A549 (cell line): ENCODE measurements at regions of chr16 and their contacts with region 1.

Region 1: GRCh38 chr16:46908540-46909372 is 24.6 kb downstream of the GPT2 start:
- DNase-seq: peak; percentile 60 to 71
- ATAC-seq: peak; percentile 45 to 88; a peak in 3 of 6 replicates
- H3K4me3 ChIP-seq: no peak overlapping the region
- H3K27ac ChIP-seq: no peak overlapping the region
- H3K4me1 ChIP-seq: no peaks in the 10 kb centered on the region
- CTCF ChIP-seq: peak; percentile 90
- EP300 ChIP-seq: no peak
- POLR2A ChIP-seq: no peak
- RAD21 ChIP-seq: peak; percentile 67 to 77

Region 2: DNA sequence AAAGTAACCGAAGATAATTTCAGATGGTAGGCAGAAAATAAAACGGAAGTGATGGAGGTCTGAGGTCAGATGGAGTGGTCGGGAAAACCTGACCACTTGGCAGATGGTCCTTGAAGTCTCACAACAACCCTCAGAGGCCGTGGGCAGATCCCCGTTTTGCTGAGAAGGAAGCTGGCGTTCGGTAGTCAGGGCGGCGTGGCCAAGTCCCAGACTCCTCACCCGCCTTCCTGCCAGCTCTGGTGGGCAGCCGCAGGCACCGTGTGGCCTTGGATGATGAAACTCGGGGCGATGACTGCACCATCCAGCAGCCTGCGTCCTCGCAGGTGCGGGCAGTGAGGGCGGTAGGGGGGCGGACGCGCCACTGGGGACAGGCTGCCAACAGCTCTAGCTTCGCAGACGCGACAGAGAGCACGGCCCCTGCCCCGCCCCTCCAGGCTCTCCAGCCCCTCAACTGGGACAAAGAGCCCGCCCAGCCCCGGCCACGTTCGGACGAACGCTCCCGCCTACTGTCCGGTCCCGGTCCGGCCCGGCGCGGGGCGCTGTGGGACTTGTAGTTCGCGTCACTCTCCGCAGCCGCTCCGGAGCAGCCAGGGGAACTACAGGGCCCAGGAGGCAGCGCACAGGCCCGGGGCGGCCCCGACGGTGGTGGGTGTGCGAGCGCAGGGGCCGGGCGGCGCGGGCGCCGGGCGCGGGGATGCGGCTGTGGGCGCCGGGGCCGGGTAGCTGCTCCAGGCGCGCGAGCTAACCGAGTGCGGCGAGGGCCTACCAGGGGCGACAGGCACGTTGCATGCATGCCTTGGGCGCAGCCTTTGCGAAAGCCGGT is 24.9 kb before region 1 on chr16 and contains the start of gene GPT2:
- CTCF ChIA-PET with region 1: interaction called, 13 read pairs
- POLR2A ChIA-PET with region 1: interaction called, 4 read pairs
- DNase-seq: peak; percentile 80 to 95
- ATAC-seq: peak; percentile 95 to 99
- H3K4me3 ChIP-seq: peak within 1 kb of the TSS; percentile 62
- H3K27ac ChIP-seq: peak within 1 kb of the TSS; percentile 88 to 92
- H3K4me1 ChIP-seq: peaks cover 18% of the 10 kb centered on the region; the same call in 2 of the 3 replicates
- CTCF ChIP-seq: no peak
- EP300 ChIP-seq: no peak
- POLR2A ChIP-seq: peak; percentile 73
- RAD21 ChIP-seq: no peak
- polyA plus RNA-seq, gene GPT2: 14.4 and 15.3 TPM in 2 replicates

Region 3: GRCh38 chr16:46918861-46919792 is 10.4 kb after region 1 on chr16:
- CTCF ChIA-PET with region 1: interaction called, 38 read pairs
- POLR2A ChIA-PET with region 1: no interaction called
- DNase-seq: no peak
- ATAC-seq: no peak; a peak in 1 of 6 replicates
- H3K4me3 ChIP-seq: no peak overlapping the region
- H3K27ac ChIP-seq: no peak overlapping the region
- H3K4me1 ChIP-seq: no peaks in the 10 kb centered on the region
- CTCF ChIP-seq: no peak
- EP300 ChIP-seq: no peak
- POLR2A ChIP-seq: no peak
- RAD21 ChIP-seq: no peak